Aorta (tissue), 5 donors: ENCODE measurements at regions of chr10 and their contacts with region 1.

Region 1: GRCh38 chr10:103685880-103686669 is 169.3 kb downstream of the SH3PXD2A start:
- DNase-seq: peak; percentile 80 to 93
- ATAC-seq: peak; percentile 86
- H3K4me3 ChIP-seq: no peak overlapping the region
- H3K27ac ChIP-seq: no peak overlapping the region
- H3K4me1 ChIP-seq: no peaks in the 10 kb centered on the region
- H3K27me3 ChIP-seq: no peaks in the 10 kb centered on the region

Region 2: DNA sequence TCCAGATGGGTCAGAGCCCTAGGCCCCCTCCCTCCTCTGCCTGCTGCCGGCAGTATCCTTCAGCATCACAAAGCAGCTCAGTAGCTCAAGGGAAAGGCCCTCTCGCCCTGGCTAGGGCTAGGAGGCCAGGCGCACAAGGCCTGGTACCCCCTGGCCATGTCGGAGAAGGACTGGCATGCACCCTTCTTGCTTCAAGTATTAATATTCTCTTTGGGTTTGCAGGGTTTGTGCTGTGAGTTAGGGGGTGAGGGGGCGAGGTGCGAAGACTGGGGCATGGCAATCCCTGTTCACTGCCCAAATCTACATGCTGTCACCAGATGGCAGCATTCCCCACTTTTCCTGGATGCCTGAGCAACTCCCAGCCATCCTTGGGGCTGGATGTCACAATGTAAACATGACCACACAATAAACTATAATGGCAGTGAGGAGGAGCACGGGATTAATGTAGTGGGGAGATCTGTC is 87.4 kb before region 1 on chr10:
- intact Hi-C with region 1: loop called (anchors 1 to 2 kb)
- DNase-seq: peak in 1 of 2 donors; percentile 55
- ATAC-seq: peak; percentile 63
- H3K4me3 ChIP-seq: no peak overlapping the region
- H3K27ac ChIP-seq: no peak overlapping the region
- H3K4me1 ChIP-seq: no peaks in the 10 kb centered on the region
- H3K27me3 ChIP-seq: no peaks in the 10 kb centered on the region